Cardiac septum (tissue), 1 donor: ENCODE measurements at regions of chr4 and their contacts with region 1.

Region 1: GRCh38 chr4:2761035-2761923 is 5.1 kb upstream of the TNIP2 start:
- DNase-seq: no peak

Region 2: DNA sequence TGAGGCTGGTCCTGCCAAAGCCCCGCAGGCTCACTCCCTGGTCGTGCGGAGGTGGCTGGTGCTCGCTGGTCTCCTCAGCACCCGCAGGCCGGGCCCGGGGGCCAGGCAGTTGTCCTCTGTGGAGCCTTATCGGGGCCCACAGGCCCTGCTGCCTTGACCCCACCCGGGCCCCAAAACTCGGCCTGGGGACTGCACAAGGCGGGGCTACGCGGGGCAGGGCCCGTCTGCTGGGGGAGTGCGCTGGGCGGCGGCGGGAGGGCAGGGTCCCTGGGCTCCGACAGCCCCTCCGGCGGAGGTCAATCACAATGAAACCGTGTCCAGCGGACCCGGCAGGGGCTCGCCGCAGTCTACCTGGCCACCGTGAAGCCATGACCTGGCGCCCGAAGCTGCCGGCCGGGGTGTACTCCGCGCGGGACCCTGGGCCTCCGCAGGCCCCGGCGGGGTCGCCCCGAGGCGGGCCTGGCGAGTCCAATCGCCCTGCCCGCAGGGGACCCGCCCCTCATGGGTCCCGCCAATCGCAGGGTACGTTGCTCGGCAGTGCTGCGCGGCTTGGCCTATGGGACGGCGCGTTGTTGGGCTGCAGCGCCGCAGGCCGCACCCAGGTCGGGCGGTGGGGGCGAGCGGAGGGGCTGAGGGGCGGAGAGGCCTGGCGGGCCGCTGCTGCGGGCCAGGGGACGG is 82.1 kb after region 1 on chr4 and contains the start of gene ADD1:
- intact Hi-C with region 1: loop called (anchors 5 kb)
- DNase-seq: peak; percentile 97
- total RNA-seq, gene ADD1: 213 TPM

Region 3: DNA sequence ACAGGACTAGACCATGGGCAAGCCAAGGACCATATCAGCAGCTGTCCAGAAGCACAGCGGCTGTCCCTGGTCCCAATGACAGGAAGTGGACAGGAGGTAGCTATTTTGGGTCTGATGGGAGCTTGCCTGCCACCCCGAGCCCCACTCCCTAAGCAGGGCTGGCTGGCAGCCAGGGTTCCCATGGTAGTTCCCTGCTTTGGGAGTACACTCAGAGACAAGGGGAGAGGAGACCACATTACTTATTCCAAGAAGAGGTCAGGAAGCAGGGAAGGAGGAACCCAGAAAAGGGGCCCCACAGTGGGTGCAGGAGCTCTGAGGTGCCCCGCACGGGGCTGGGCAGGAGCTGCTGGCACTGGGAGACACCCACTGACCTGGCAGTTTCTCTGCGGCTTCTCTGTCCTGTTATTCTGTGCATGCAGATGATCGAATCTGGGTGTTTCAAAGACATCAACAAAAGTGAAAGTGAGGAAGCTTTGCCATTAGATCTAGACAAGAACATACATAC is 276.7 kb after region 1 on chr4:
- intact Hi-C with region 1: loop called (anchors 5 kb)
- DNase-seq: peak; percentile 85